B cell (primary cell): ENCODE measurements at regions of chr1 and their contacts with region 1.

Region 1: GRCh38 chr1:43974443-43975248 is at the start of gene ATP6V0B:
- DNase-seq: peak; percentile 95
- ATAC-seq: peak; percentile 72
- H3K4me3 ChIP-seq: peak within 1 kb of the TSS; percentile 79 to 97 (median 89)
- H3K4me3 Mint-ChIP-seq: peak within 1 kb of the TSS; percentile 97
- H3K27ac ChIP-seq: peak within 1 kb of the TSS; percentile 89 to 96
- H3K27ac Mint-ChIP-seq: peak within 1 kb of the TSS; percentile 97
- H3K4me1 ChIP-seq: peaks cover 33 to 61% of the 10 kb centered on the region in 2 donors
- H3K4me1 Mint-ChIP-seq: peaks cover 69% of the 10 kb centered on the region
- H3K27me3 ChIP-seq: no peaks in the 10 kb centered on the region
- H3K27me3 Mint-ChIP-seq: no peaks in the 10 kb centered on the region
- CTCF ChIP-seq: no peak
- total RNA-seq, gene ATP6V0B: 91.0 and 94.2 TPM in 2 replicates

Region 2: GRCh38 chr1:43650310-43651085 is 324.1 kb before region 1 on chr1:
- CTCF ChIA-PET with region 1: no interaction called
- POLR2A ChIA-PET with region 1: no interaction called
- intact Hi-C with region 1: loop called (anchors 1 kb)
- DNase-seq: peak; percentile 97
- ATAC-seq: peak; percentile 77
- H3K4me3 ChIP-seq: peak overlapping the region; percentile 82 to 98 (median 92)
- H3K4me3 Mint-ChIP-seq: peak overlapping the region; percentile 92
- H3K27ac ChIP-seq: peak overlapping the region; percentile 84 to 86
- H3K27ac Mint-ChIP-seq: peak overlapping the region; percentile 94
- H3K4me1 ChIP-seq: peaks cover 23 to 25% of the 10 kb centered on the region in 2 donors
- H3K4me1 Mint-ChIP-seq: peaks cover 45% of the 10 kb centered on the region
- H3K27me3 ChIP-seq: no peaks in the 10 kb centered on the region
- H3K27me3 Mint-ChIP-seq: peaks cover under 1% of the 10 kb centered on the region
- CTCF ChIP-seq: no peak

Region 3: GRCh38 chr1:43706598-43707495 is 267.8 kb before region 1 on chr1:
- CTCF ChIA-PET with region 1: no interaction called
- POLR2A ChIA-PET with region 1: no interaction called
- intact Hi-C with region 1: loop called (anchors 10 kb)
- DNase-seq: peak; percentile 92
- ATAC-seq: peak; percentile 96
- H3K4me3 ChIP-seq: peak overlapping the region; percentile 54 to 81 (median 73)
- H3K4me3 Mint-ChIP-seq: peak overlapping the region; percentile 91
- H3K27ac ChIP-seq: peak overlapping the region; percentile 17 to 18
- H3K27ac Mint-ChIP-seq: peak overlapping the region; percentile 78
- H3K4me1 ChIP-seq: peaks cover 10 to 17% of the 10 kb centered on the region in 2 donors
- H3K4me1 Mint-ChIP-seq: peaks cover 29% of the 10 kb centered on the region
- H3K27me3 ChIP-seq: no peaks in the 10 kb centered on the region
- H3K27me3 Mint-ChIP-seq: no peaks in the 10 kb centered on the region
- CTCF ChIP-seq: no peak

Region 4: DNA sequence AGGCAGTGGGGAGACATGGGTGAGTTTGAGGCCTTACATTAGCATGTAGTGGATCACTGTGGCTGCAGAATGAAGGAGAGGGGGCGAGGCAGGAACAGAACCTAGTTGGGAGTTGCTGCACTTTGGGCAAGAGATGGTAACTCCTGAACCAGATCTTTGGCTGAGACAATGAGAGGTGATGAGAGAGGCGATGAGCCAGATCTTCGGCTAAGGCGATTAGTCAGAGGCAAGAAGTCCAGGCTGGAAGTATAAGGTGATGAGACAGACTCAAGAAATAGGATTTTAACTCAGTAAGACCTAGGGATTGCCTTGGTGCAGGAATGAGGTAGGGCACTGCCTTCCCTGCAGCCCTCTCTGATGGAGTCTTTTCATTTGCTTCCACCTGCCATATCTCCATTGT is 50.1 kb before region 1 on chr1:
- CTCF ChIA-PET with region 1: no interaction called
- POLR2A ChIA-PET with region 1: no interaction called
- intact Hi-C with region 1: no loop called
- DNase-seq: no peak
- ATAC-seq: no peak
- H3K4me3 ChIP-seq: no peak overlapping the region
- H3K4me3 Mint-ChIP-seq: no peak overlapping the region
- H3K27ac ChIP-seq: no peak overlapping the region
- H3K27ac Mint-ChIP-seq: no peak overlapping the region
- H3K4me1 ChIP-seq: no peaks in the 10 kb centered on the region
- H3K4me1 Mint-ChIP-seq: no peaks in the 10 kb centered on the region
- H3K27me3 ChIP-seq: no peaks in the 10 kb centered on the region
- H3K27me3 Mint-ChIP-seq: no peaks in the 10 kb centered on the region
- CTCF ChIP-seq: no peak

Region 5: DNA sequence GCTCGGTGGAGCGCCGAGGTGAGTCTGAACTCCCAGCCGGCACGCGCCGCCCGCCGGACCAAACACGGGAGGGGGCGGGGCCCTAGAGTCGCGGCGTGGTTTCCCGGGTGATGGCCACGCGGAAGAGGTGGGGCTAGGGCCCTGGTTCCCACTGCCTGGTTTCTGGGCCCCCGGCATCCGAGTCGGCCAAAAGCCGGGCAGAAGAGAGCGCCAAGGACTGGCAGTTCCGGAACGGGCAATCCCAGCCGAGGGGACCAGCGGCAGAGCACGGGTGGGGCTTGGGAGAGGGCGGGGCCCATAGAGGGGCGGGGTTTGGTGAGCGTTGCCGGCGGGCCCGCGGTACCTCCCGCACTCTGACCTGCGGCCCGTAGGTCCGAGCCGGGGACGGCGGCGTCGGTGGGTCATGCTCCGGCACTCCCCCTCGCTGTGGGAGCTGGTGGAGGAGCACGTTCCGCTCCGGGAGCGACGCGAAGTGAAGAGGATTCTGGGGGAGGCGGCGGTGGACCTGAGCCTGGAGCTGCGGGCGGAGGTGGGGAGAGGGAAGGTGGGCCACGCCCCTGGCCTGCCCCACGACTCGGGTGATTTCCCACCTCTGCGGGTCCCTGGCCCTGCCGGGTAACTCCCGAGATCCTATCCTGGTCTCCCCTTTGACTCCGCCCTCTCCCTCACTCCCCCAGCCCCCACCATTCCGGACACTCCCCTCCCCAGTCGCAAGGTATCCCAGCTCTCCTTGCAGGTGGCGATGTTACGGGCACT is 17.0 kb after region 1 on chr1 and contains the start of gene CCDC24:
- CTCF ChIA-PET with region 1: interaction called, 6 read pairs
- POLR2A ChIA-PET with region 1: interaction called, 5 read pairs
- intact Hi-C with region 1: loop called (anchors 1 kb)
- DNase-seq: peak; percentile 84
- ATAC-seq: peak; percentile 89
- H3K4me3 ChIP-seq: peak within 1 kb of the TSS; percentile 11 to 81 (median 72)
- H3K4me3 Mint-ChIP-seq: peak within 1 kb of the TSS; percentile 96
- H3K27ac ChIP-seq: peak within 1 kb of the TSS in 1 of 2 donors; percentile 75
- H3K27ac Mint-ChIP-seq: peak within 1 kb of the TSS; percentile 91
- H3K4me1 ChIP-seq: peaks cover 22 to 44% of the 10 kb centered on the region in 2 donors
- H3K4me1 Mint-ChIP-seq: peaks cover 38% of the 10 kb centered on the region
- H3K27me3 ChIP-seq: no peaks in the 10 kb centered on the region
- H3K27me3 Mint-ChIP-seq: no peaks in the 10 kb centered on the region
- CTCF ChIP-seq: no peak
- total RNA-seq, gene CCDC24: 18.0 and 18.4 TPM in 2 replicates

Region 6: DNA sequence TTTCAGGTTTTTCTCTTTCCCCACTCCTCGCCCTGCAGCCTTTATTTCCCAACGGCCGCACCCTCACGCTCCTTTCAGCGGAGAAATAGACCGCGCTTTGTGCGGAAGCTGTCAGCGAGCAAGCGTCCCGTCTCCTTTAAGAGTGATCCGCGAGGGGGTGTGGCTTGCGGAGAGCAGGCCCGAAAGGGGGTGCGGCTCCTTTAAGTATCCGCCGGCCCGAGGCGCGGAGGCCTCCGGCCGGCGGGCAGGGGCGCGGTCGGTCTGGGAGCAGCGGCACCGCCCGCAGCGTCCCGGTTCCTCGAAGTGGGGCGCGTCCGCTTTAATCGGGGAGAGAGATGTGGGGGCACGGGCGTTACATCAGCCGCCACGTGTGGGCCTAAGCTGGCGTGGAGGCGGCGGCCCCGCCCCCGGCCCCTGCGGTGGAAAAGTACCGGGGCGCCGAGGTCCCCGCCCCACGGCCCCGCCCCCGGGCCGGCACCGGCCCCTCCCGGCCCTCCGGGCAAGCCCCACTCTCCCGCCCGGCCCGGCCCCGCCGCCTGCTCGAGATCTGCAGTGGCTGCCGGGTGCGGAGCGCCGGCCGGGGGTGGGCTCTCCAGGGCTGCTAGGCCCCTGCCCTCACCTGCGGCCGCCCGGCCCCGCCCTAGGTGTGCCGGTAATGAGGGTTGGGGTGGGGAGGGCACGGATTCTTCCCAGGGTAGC is 55.4 kb after region 1 on chr1:
- CTCF ChIA-PET with region 1: no interaction called
- POLR2A ChIA-PET with region 1: no interaction called
- intact Hi-C with region 1: loop called (anchors 1 kb)
- DNase-seq: peak; percentile 94
- ATAC-seq: peak; percentile 80
- H3K4me3 ChIP-seq: peak overlapping the region; percentile 17 to 87 (median 81)
- H3K4me3 Mint-ChIP-seq: peak overlapping the region; percentile 98
- H3K27ac ChIP-seq: peak overlapping the region; percentile 71 to 72
- H3K27ac Mint-ChIP-seq: peak overlapping the region; percentile 96
- H3K4me1 ChIP-seq: peaks cover 10 to 31% of the 10 kb centered on the region in 2 donors
- H3K4me1 Mint-ChIP-seq: peaks cover 37% of the 10 kb centered on the region
- H3K27me3 ChIP-seq: peaks cover 0 to 4% (median 0%) of the 10 kb centered on the region in 4 experiments
- H3K27me3 Mint-ChIP-seq: no peaks in the 10 kb centered on the region
- CTCF ChIP-seq: no peak